ENCODE measurements at regions of chr15 and their contacts with region 1.

Region 1: GRCh38 chr15:37134699-37135131 is 34.4 kb upstream of the MEIS2 start:
- DNase-seq: peak; percentile 58
- ATAC-seq: peak; percentile 68
- H3K4me3 ChIP-seq: no peak overlapping the region
- H3K27ac ChIP-seq: no peak overlapping the region
- H3K4me1 ChIP-seq: peaks cover 1% of the 10 kb centered on the region; the same call in 1 of the 2 replicates
- H3K27me3 ChIP-seq: no peaks in the 10 kb centered on the region
- CTCF ChIP-seq: peak; percentile 80
- POLR2A ChIP-seq: no peak
- RAD21 ChIP-seq: peak; percentile 53

Region 2: GRCh38 chr15:35289024-35289617 is 1845.6 kb before region 1 on chr15:
- CTCF ChIA-PET with region 1: no interaction called
- POLR2A ChIA-PET with region 1: no interaction called
- dilution Hi-C with region 1: no loop called
- in situ Hi-C with region 1: loop called (anchors 25 kb)
- intact Hi-C with region 1: no loop called
- DNase-seq: peak; percentile 81
- ATAC-seq: peak; percentile 87
- H3K4me3 ChIP-seq: no peak overlapping the region
- H3K27ac ChIP-seq: no peak overlapping the region
- H3K4me1 ChIP-seq: peaks cover 6% of the 10 kb centered on the region
- H3K27me3 ChIP-seq: no peaks in the 10 kb centered on the region
- CTCF ChIP-seq: peak; percentile 87
- POLR2A ChIP-seq: no peak
- RAD21 ChIP-seq: peak; percentile 94

Region 3: DNA sequence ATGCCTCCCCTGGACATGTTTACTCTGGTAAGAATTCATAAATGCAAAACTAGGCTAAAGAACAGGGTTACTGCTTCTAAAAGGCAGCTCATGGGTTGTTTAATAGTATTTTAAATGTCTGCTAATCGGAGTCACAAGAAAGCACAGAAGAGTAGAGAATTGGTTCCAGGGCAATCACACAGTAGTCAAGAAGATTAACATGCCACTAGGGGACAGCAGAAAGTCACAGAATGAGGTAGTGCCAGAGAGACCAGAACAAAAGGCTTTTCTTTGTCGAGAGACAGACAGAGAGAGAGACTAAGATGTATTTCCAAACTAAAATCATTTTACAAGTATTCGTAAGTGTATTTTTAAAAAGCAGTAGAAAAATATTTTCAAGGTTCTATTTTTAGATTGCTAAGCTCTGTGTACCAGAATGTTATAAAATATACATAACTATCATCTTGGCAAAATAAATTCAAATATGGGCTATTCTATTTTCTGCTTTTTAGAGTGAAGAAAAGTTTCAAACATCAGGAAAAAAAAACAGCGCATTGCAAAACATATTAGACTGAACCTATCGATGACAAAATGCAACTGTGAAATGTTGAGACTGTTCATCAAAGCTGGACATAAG is 633.5 kb before region 1 on chr15:
- CTCF ChIA-PET with region 1: interaction called, 3 read pairs
- POLR2A ChIA-PET with region 1: no interaction called
- dilution Hi-C with region 1: no loop called
- in situ Hi-C with region 1: loop called (anchors 25 kb)
- intact Hi-C with region 1: loop called (anchors 5 kb)
- DNase-seq: peak; percentile 79
- ATAC-seq: peak; percentile 89
- H3K4me3 ChIP-seq: no peak overlapping the region
- H3K27ac ChIP-seq: no peak overlapping the region
- H3K4me1 ChIP-seq: peaks cover 5% of the 10 kb centered on the region
- H3K27me3 ChIP-seq: no peaks in the 10 kb centered on the region
- CTCF ChIP-seq: peak; percentile 79
- POLR2A ChIP-seq: peak; percentile 28; the same call in 1 of the 2 replicates
- RAD21 ChIP-seq: peak; percentile 90

Region 4: DNA sequence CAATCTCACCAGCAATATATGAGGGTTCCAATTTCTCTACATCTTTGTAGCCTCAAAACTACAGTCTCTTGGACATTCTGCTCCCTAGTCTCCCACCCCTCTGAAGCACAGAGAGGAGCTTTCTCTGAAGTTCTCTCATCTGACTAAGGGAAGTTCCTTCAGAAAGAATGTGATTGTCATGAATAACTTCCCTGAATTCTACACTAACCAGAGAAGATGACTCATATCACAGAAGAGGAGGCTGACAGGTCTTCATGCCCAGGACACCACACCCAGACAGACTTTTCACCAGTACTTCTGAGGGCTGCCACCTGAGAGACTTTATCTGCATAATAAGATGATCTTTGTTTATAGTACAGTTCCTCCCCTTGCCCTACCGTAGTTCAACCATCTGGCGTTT is 502.5 kb before region 1 on chr15:
- CTCF ChIA-PET with region 1: no interaction called
- POLR2A ChIA-PET with region 1: no interaction called
- dilution Hi-C with region 1: no loop called
- in situ Hi-C with region 1: no loop called
- intact Hi-C with region 1: loop called (anchors 10 kb)
- DNase-seq: peak; percentile 75
- ATAC-seq: peak; percentile 81
- H3K4me3 ChIP-seq: no peak overlapping the region
- H3K27ac ChIP-seq: no peak overlapping the region
- H3K4me1 ChIP-seq: peaks cover 4% of the 10 kb centered on the region
- H3K27me3 ChIP-seq: no peaks in the 10 kb centered on the region
- CTCF ChIP-seq: no peak
- POLR2A ChIP-seq: no peak
- RAD21 ChIP-seq: no peak

Region 5: GRCh38 chr15:37100109-37100965 is 34.4 kb before region 1 on chr15 and contains the start of gene MEIS2:
- CTCF ChIA-PET with region 1: interaction called, 3 read pairs
- POLR2A ChIA-PET with region 1: interaction called, 4 read pairs
- dilution Hi-C with region 1: no loop called
- in situ Hi-C with region 1: no loop called
- intact Hi-C with region 1: loop called (anchors 2 kb)
- DNase-seq: peak; percentile 96
- ATAC-seq: peak; percentile 52
- H3K4me3 ChIP-seq: peak within 1 kb of the TSS; percentile 94
- H3K27ac ChIP-seq: peak within 1 kb of the TSS; percentile 99
- H3K4me1 ChIP-seq: peaks cover 3% of the 10 kb centered on the region
- H3K27me3 ChIP-seq: no peaks in the 10 kb centered on the region
- CTCF ChIP-seq: no peak
- POLR2A ChIP-seq: peak; percentile 77
- RAD21 ChIP-seq: no peak
- total RNA-seq, gene MEIS2: 50.3 and 71.3 TPM in 2 replicates

Measured in IMR-90 (cell line).